ENCODE measurements at regions of chr5 and their contacts with region 1.

Region 1: GRCh38 chr5:134491841-134492588 is 33.5 kb upstream of the JADE2 start:
- DNase-seq: no peak
- ATAC-seq: no peak
- H3K4me3 ChIP-seq: no peak overlapping the region
- H3K27ac ChIP-seq: no peak overlapping the region
- H3K4me1 ChIP-seq: no peaks in the 10 kb centered on the region
- H3K27me3 ChIP-seq: no peaks in the 10 kb centered on the region
- CTCF ChIP-seq: no peak
- POLR2A ChIP-seq: no peak

Region 2: DNA sequence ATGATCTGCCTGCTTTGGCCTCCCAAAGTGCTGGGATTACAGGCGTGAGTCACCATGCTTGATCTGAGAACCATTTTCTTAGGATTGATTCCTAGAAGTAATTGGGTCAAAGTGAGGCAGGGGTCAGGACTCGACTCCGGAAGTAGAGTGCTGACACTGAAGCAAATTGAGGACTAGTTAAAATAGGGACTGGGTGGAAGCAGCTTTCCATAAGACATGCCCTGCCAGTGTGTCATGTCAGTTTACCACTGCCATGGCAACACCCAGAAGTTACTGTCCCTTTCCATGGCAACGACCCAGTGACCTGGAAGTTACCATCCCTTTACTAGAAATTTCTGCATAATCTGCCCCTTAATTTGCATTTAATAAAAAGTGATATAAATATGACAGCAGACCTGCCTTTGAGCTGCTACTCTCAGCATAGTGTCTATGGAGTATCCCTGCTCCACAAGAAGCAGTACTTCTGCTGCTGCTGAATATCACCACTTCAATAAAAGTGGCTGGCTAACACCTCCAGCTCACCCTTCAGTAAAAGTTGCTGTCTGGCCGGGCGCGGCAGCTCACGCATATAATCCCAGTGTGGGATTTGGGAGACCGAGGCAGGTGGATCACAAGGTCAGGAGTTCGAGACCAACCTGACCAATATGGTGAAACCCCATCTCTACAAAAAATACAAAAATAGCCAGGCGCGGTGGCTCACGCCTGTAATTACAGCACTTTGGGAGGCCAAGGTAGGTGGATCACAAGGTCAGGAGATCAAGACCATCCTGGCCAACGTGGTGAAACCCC is 14.4 kb before region 1 on chr5:
- in situ Hi-C with region 1: no loop called
- intact Hi-C with region 1: loop called (anchors 2 kb)
- DNase-seq: no peak
- ATAC-seq: no peak
- H3K4me3 ChIP-seq: no peak overlapping the region
- H3K27ac ChIP-seq: no peak overlapping the region
- H3K4me1 ChIP-seq: no peaks in the 10 kb centered on the region
- H3K27me3 ChIP-seq: no peaks in the 10 kb centered on the region
- CTCF ChIP-seq: no peak
- POLR2A ChIP-seq: no peak

Region 3: DNA sequence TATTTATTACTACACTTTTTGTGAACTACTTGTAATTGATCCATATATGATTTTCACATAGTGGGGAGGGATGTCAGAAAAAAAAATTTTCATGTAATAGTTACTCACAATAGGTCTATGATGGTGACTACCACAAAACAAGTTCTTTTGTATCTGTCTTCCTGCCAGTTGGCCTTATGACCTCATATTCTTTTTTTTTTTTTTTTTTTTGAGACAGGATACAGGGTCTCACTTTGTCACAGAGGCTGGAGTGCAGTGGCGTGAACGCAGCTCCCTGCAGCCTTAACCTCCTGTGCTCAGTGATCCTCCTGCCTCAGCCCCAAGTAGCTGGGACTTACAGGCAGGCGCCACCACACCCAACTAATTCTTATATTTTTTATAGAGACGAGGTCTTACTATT is 167.4 kb after region 1 on chr5:
- in situ Hi-C with region 1: no loop called
- intact Hi-C with region 1: no loop called
- DNase-seq: no peak
- ATAC-seq: no peak
- H3K4me3 ChIP-seq: no peak overlapping the region
- H3K27ac ChIP-seq: no peak overlapping the region
- H3K4me1 ChIP-seq: no peaks in the 10 kb centered on the region
- H3K27me3 ChIP-seq: no peaks in the 10 kb centered on the region
- CTCF ChIP-seq: no peak
- POLR2A ChIP-seq: no peak

Region 4: DNA sequence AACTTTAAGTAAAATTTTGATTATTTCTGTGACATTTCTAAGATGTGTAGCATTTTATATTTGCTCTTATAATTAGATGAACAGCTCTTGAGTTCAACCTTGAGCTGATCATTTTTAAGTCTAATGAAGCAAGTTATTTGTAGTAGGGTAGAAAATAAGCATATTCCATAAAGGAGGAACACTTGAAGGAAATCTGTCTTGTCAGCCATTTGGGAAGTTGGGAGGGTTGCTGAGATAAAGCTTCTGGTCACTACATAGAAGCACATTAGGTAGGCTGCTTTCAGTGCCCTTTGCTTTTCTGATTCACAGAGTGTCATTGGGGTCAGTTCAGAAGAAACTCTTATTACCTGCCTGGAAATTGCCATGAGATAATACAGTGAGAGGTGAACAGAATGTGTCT is 200.7 kb after region 1 on chr5:
- in situ Hi-C with region 1: no loop called
- intact Hi-C with region 1: no loop called
- DNase-seq: no peak
- ATAC-seq: no peak
- H3K4me3 ChIP-seq: no peak overlapping the region
- H3K27ac ChIP-seq: no peak overlapping the region
- H3K4me1 ChIP-seq: no peaks in the 10 kb centered on the region
- H3K27me3 ChIP-seq: no peaks in the 10 kb centered on the region
- CTCF ChIP-seq: no peak
- POLR2A ChIP-seq: no peak

Region 5: DNA sequence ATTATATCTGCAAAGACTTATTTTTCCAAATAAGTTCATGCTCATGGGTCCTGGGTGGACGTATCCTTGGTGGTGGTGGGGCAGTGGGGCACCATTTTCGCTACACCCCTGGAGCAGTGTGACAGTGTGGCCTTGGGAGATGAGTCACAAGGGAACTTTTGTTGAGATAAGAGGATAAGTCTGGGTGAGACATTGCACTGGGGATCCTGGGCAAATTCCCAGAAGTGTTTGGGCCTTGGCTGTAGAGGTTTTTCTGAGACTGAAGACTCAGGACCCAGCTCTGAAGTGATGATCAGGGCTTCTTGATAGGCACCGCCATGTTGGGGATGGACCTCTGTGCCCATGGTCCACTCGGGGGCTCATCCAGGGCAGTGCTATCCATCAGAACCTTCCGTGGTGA is 757.6 kb after region 1 on chr5:
- in situ Hi-C with region 1: no loop called
- intact Hi-C with region 1: no loop called
- DNase-seq: no peak
- ATAC-seq: no peak
- H3K4me3 ChIP-seq: no peak overlapping the region
- H3K27ac ChIP-seq: no peak overlapping the region
- H3K4me1 ChIP-seq: peaks cover 43 to 46% of the 10 kb centered on the region in 2 donors
- H3K27me3 ChIP-seq: no peaks in the 10 kb centered on the region
- CTCF ChIP-seq: no peak
- POLR2A ChIP-seq: no peak

Measured in gastrocnemius medialis (tissue), 4 donors.